Heart right ventricle (tissue), 16 donors: ENCODE measurements at regions of chr12 and their contacts with region 1.

Region 1: DNA sequence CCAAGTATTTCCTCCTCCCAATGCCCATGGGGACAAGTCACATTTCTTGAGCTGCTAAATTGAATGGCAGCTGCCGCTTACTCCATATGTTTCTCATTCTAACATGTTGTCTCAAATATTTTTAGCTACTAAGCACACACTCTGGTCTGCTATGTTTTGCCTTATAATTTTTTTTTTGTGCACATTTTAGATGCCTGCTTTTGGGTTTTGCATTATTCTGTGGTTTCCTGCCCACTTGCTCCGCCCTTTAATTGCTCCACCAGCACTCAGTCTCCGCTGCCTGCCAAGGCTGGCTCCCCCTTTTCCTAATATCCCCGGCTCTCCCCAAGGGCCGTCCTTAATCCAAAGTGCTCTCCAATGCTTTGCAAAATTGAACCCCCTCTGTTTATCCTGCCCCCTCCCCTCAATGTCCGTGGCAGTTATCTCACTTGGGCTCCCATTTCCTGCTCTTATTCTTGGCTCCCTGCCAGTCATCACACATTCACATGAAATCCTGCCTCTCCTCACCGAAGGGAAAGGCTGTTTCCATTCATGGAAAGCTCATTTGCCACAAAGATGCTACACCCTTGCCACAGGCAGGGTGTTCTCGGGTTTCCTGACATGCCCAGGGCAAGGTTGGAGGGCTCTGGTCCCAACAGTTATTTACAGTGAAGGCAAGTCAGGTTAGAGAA is 79.4 kb downstream of the C12orf75 start:
- DNase-seq: peak; percentile 37 to 83
- ATAC-seq: peak; percentile 59 to 95 (median 90)
- H3K4me3 ChIP-seq: no peak overlapping the region
- H3K27ac ChIP-seq: peak overlapping the region in 3 of 10 donors; percentile 43 to 72 (median 59)
- H3K4me1 ChIP-seq: peaks cover 0 to 33% (median 24%) of the 10 kb centered on the region in 9 donors
- H3K27me3 ChIP-seq: no peaks in the 10 kb centered on the region
- CTCF ChIP-seq: no peak

Region 2: GRCh38 chr12:106211973-106212372 is 802.0 kb after region 1 on chr12:
- intact Hi-C with region 1: loop called in 1 of 10 experiments (anchors 10 kb)
- DNase-seq: no peak
- ATAC-seq: no peak
- H3K4me3 ChIP-seq: no peak overlapping the region
- H3K27ac ChIP-seq: no peak overlapping the region
- H3K4me1 ChIP-seq: no peaks in the 10 kb centered on the region
- H3K27me3 ChIP-seq: peaks cover 0 to 3% (median 0%) of the 10 kb centered on the region in 7 donors
- CTCF ChIP-seq: no peak